Activated naive CD4-positive, alpha-beta T cell treated with anti-CD3 and anti-CD28 coated beads for 36 hours (primary cell): ENCODE measurements at regions of chr11 and their contacts with region 1.

Region 1: GRCh38 chr11:68459886-68460740 is 439 bp upstream of the PPP6R3 start:
- DNase-seq: peak; percentile 98
- H3K4me3 Mint-ChIP-seq: peak overlapping the region; percentile 91
- H3K27ac Mint-ChIP-seq: peak overlapping the region; percentile 89
- H3K4me1 Mint-ChIP-seq: peaks cover 30% of the 10 kb centered on the region
- H3K27me3 Mint-ChIP-seq: no peaks in the 10 kb centered on the region

Region 2: GRCh38 chr11:68030318-68031138 is 429.6 kb before region 1 on chr11 and contains the start of gene NDUFS8:
- CTCF ChIA-PET with region 1: no interaction called
- intact Hi-C with region 1: loop called (anchors 5 kb)
- DNase-seq: peak; percentile 98
- H3K4me3 Mint-ChIP-seq: peak within 1 kb of the TSS; percentile 91
- H3K27ac Mint-ChIP-seq: peak within 1 kb of the TSS; percentile 88
- H3K4me1 Mint-ChIP-seq: peaks cover 23% of the 10 kb centered on the region
- H3K27me3 Mint-ChIP-seq: no peaks in the 10 kb centered on the region
- total RNA-seq, gene NDUFS8: 142 to 162 TPM

Region 3: GRCh38 chr11:68282141-68282970 is 177.8 kb before region 1 on chr11:
- CTCF ChIA-PET with region 1: no interaction called
- intact Hi-C with region 1: loop called (anchors 2 kb)
- DNase-seq: peak; percentile 83
- H3K4me3 Mint-ChIP-seq: peak overlapping the region; percentile 62
- H3K27ac Mint-ChIP-seq: peak overlapping the region; percentile 79
- H3K4me1 Mint-ChIP-seq: peaks cover 26% of the 10 kb centered on the region
- H3K27me3 Mint-ChIP-seq: no peaks in the 10 kb centered on the region

Region 4: DNA sequence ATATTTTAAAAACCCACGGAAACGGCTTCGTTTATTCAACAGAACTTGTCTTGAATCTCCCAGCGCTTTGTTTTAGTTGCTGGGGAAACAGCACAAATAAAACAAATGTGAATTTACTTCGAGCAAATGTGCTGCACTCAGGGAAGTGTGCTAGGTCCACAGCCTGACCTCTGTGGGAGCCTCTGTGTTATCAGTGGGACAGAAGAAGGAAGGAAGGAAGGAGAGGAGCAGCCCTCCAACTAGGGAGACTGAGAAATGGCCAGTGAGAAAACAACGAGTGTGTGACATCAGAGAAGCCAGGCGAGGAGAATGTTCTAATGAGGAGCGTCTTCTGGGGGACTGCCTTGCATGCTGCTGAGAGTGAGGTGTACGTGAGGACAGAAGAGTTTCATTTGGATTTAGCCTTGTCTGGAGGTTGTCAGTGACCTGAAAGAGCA is 43.2 kb after region 1 on chr11:
- CTCF ChIA-PET with region 1: interaction called, 3 read pairs
- intact Hi-C with region 1: loop called (anchors 5 kb)
- DNase-seq: no peak
- H3K4me3 Mint-ChIP-seq: no peak overlapping the region
- H3K27ac Mint-ChIP-seq: peak overlapping the region; percentile 0
- H3K4me1 Mint-ChIP-seq: peaks cover 79% of the 10 kb centered on the region
- H3K27me3 Mint-ChIP-seq: no peaks in the 10 kb centered on the region

Region 5: DNA sequence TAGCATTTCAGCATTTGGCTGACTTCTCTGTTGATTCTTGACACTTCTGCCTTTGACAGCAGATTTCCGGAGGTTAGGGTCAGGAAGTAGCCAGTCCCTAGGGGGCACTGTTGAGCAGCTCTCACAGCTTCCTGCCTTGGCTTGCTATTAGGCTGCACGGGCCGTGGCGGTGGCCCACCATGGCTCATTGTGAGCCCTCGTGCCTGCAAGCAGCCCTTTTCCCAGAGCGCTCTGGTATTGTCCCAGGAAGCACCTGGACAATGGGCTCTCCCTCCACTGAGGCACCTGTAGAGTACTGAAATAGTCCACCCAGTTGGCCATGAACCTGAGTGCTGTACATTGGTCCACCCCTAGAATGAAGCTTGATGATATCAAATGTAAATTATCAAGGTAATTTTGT is 124.0 kb after region 1 on chr11:
- CTCF ChIA-PET with region 1: interaction called, 3 read pairs
- intact Hi-C with region 1: loop called (anchors 5 kb)
- DNase-seq: peak; percentile 75
- H3K4me3 Mint-ChIP-seq: no peak overlapping the region
- H3K27ac Mint-ChIP-seq: no peak overlapping the region
- H3K4me1 Mint-ChIP-seq: peaks cover 8% of the 10 kb centered on the region
- H3K27me3 Mint-ChIP-seq: no peaks in the 10 kb centered on the region

Region 6: GRCh38 chr11:68839054-68839865 is 379.1 kb after region 1 on chr11:
- CTCF ChIA-PET with region 1: no interaction called
- intact Hi-C with region 1: loop called (anchors 2 kb)
- DNase-seq: peak; percentile 96
- H3K4me3 Mint-ChIP-seq: peak overlapping the region; percentile 77
- H3K27ac Mint-ChIP-seq: peak overlapping the region; percentile 88
- H3K4me1 Mint-ChIP-seq: peaks cover 50% of the 10 kb centered on the region
- H3K27me3 Mint-ChIP-seq: no peaks in the 10 kb centered on the region